Caco-2 (cell line): ENCODE measurements at regions of chr2 and their contacts with region 1.

Region 1: GRCh38 chr2:113977660-113978523 is 88.0 kb downstream of the ACTR3 start:
- DNase-seq: peak; percentile 74 to 88
- H3K4me3 ChIP-seq: no peak overlapping the region
- H3K4me3 Mint-ChIP-seq: peak overlapping the region; percentile 63
- H3K27ac Mint-ChIP-seq: peak overlapping the region; percentile 92
- H3K4me1 ChIP-seq: peaks cover 23% of the 10 kb centered on the region
- H3K4me1 Mint-ChIP-seq: peaks cover 16% of the 10 kb centered on the region
- H3K27me3 ChIP-seq: no peaks in the 10 kb centered on the region
- H3K27me3 Mint-ChIP-seq: no peaks in the 10 kb centered on the region
- CTCF ChIP-seq: peak; percentile 51 to 73

Region 2: DNA sequence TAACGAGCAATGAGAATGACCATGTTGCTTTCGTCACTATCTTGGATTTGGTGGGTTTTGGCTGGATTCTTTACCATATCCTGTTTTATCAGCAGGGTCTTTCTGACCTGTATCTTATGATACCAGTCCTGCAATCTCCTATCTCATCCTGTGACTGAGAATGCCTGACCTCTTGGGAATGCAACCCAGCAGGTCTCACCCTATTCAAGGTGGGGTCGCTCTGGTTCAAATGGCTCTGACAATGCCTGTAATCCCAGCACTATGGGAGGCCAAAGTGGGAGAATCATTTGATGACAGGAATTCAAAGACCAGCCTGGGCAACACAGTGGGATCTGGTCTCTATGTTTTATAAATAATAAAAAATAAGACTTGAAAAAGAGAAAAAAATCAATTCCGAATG is 85.5 kb after region 1 on chr2:
- CTCF ChIA-PET with region 1: no interaction called
- POLR2A ChIA-PET with region 1: no interaction called
- intact Hi-C with region 1: loop called (anchors 5 kb)
- DNase-seq: peak in 1 of 2 experiments; percentile 43
- H3K4me3 ChIP-seq: no peak overlapping the region
- H3K4me3 Mint-ChIP-seq: no peak overlapping the region
- H3K27ac Mint-ChIP-seq: no peak overlapping the region
- H3K4me1 ChIP-seq: peaks cover 3% of the 10 kb centered on the region; the same call in 1 of the 2 replicates
- H3K4me1 Mint-ChIP-seq: no peaks in the 10 kb centered on the region
- H3K27me3 ChIP-seq: no peaks in the 10 kb centered on the region; the same call in 1 of the 2 replicates
- H3K27me3 Mint-ChIP-seq: peaks cover 6% of the 10 kb centered on the region
- CTCF ChIP-seq: no peak

Region 3: GRCh38 chr2:114201781-114202180 is 223.9 kb after region 1 on chr2:
- CTCF ChIA-PET with region 1: interaction called, 4 read pairs
- POLR2A ChIA-PET with region 1: interaction called, 7 read pairs
- intact Hi-C with region 1: loop called (anchors 1 kb)
- DNase-seq: peak in 1 of 2 experiments; percentile 8
- H3K4me3 ChIP-seq: no peak overlapping the region
- H3K4me3 Mint-ChIP-seq: no peak overlapping the region
- H3K27ac Mint-ChIP-seq: no peak overlapping the region
- H3K4me1 ChIP-seq: no peaks in the 10 kb centered on the region
- H3K4me1 Mint-ChIP-seq: no peaks in the 10 kb centered on the region
- H3K27me3 ChIP-seq: no peaks in the 10 kb centered on the region
- H3K27me3 Mint-ChIP-seq: no peaks in the 10 kb centered on the region
- CTCF ChIP-seq: peak; percentile 24 to 35

Region 4: GRCh38 chr2:114488841-114489530 is 511.1 kb after region 1 on chr2:
- CTCF ChIA-PET with region 1: no interaction called
- POLR2A ChIA-PET with region 1: no interaction called
- intact Hi-C with region 1: loop called (anchors 1 kb)
- DNase-seq: no peak
- H3K4me3 ChIP-seq: no peak overlapping the region
- H3K4me3 Mint-ChIP-seq: no peak overlapping the region
- H3K27ac Mint-ChIP-seq: no peak overlapping the region
- H3K4me1 ChIP-seq: no peaks in the 10 kb centered on the region
- H3K4me1 Mint-ChIP-seq: no peaks in the 10 kb centered on the region
- H3K27me3 ChIP-seq: no peaks in the 10 kb centered on the region
- H3K27me3 Mint-ChIP-seq: no peaks in the 10 kb centered on the region
- CTCF ChIP-seq: no peak

Region 5: GRCh38 chr2:114550895-114551793 is 573.3 kb after region 1 on chr2:
- CTCF ChIA-PET with region 1: interaction called, 48 read pairs
- POLR2A ChIA-PET with region 1: interaction called, 3 read pairs
- intact Hi-C with region 1: loop called (anchors 1 kb)
- DNase-seq: peak; percentile 72 to 77
- H3K4me3 ChIP-seq: no peak overlapping the region
- H3K4me3 Mint-ChIP-seq: no peak overlapping the region
- H3K27ac Mint-ChIP-seq: no peak overlapping the region
- H3K4me1 ChIP-seq: peaks cover 21% of the 10 kb centered on the region
- H3K4me1 Mint-ChIP-seq: peaks cover 18% of the 10 kb centered on the region
- H3K27me3 ChIP-seq: no peaks in the 10 kb centered on the region
- H3K27me3 Mint-ChIP-seq: peaks cover under 1% of the 10 kb centered on the region
- CTCF ChIP-seq: peak; percentile 71 to 93